CD4-positive, alpha-beta T cell (primary cell): ENCODE measurements at regions of chr2 and their contacts with region 1.

Region 1: GRCh38 chr2:217162533-217162932 is 302.7 kb upstream of the TNP1 start:
- DNase-seq: peak in 2 of 14 experiments; percentile 27 to 35
- ATAC-seq: peak; percentile 26
- H3K4me3 ChIP-seq: no peak overlapping the region
- H3K4me3 Mint-ChIP-seq: no peak overlapping the region
- H3K27ac ChIP-seq: no peak overlapping the region
- H3K27ac Mint-ChIP-seq: no peak overlapping the region
- H3K4me1 ChIP-seq: no peaks in the 10 kb centered on the region
- H3K4me1 Mint-ChIP-seq: peaks cover 19% of the 10 kb centered on the region
- H3K27me3 ChIP-seq: no peaks in the 10 kb centered on the region
- H3K27me3 Mint-ChIP-seq: peaks cover 4% of the 10 kb centered on the region
- CTCF ChIP-seq: no peak

Region 2: DNA sequence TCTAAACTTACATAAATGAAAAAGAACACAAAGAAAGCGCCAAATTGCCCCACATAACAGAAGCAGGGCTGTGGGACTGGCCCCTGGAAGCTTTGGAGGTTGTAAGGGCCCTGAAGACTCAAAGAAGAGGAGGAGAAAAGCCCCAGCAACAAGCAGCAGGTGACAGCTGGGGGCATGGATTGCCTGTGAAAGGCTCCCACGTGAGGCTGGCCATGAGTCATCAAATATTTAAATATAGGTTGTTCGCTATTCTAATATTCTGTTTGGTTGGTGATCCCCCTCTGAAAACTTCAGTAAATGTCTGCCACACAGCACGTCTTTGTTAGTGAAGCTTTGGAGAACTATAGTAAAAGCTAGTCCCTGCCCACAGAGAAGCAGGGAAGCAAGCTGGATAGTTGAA is 1281.6 kb before region 1 on chr2:
- CTCF ChIA-PET with region 1: no interaction called
- POLR2A ChIA-PET with region 1: no interaction called
- intact Hi-C with region 1: no loop called
- DNase-seq: no peak
- ATAC-seq: no peak
- H3K4me3 ChIP-seq: no peak overlapping the region
- H3K4me3 Mint-ChIP-seq: no peak overlapping the region
- H3K27ac ChIP-seq: no peak overlapping the region
- H3K27ac Mint-ChIP-seq: no peak overlapping the region
- H3K4me1 ChIP-seq: no peaks in the 10 kb centered on the region
- H3K4me1 Mint-ChIP-seq: no peaks in the 10 kb centered on the region
- H3K27me3 ChIP-seq: peaks cover 0 to 7% of the 10 kb centered on the region in 2 experiments
- H3K27me3 Mint-ChIP-seq: no peaks in the 10 kb centered on the region
- CTCF ChIP-seq: no peak

Region 3: GRCh38 chr2:216698895-216699294 is 463.6 kb before region 1 on chr2:
- CTCF ChIA-PET with region 1: no interaction called
- POLR2A ChIA-PET with region 1: no interaction called
- intact Hi-C with region 1: loop called in 1 of 2 experiments (anchors 5 kb)
- DNase-seq: peak in 3 of 14 experiments; percentile 13 to 49 (median 38)
- ATAC-seq: peak; percentile 64
- H3K4me3 ChIP-seq: no peak overlapping the region
- H3K4me3 Mint-ChIP-seq: no peak overlapping the region
- H3K27ac ChIP-seq: no peak overlapping the region
- H3K27ac Mint-ChIP-seq: no peak overlapping the region
- H3K4me1 ChIP-seq: peaks cover 10% of the 10 kb centered on the region
- H3K4me1 Mint-ChIP-seq: peaks cover 8% of the 10 kb centered on the region
- H3K27me3 ChIP-seq: peaks cover 28 to 39% of the 10 kb centered on the region in 2 experiments
- H3K27me3 Mint-ChIP-seq: peaks cover 16% of the 10 kb centered on the region
- CTCF ChIP-seq: peak; percentile 26

Region 4: GRCh38 chr2:216918088-216918680 is 244.3 kb before region 1 on chr2:
- CTCF ChIA-PET with region 1: no interaction called
- POLR2A ChIA-PET with region 1: no interaction called
- intact Hi-C with region 1: no loop called
- DNase-seq: no peak
- ATAC-seq: no peak
- H3K4me3 ChIP-seq: no peak overlapping the region
- H3K4me3 Mint-ChIP-seq: no peak overlapping the region
- H3K27ac ChIP-seq: no peak overlapping the region
- H3K27ac Mint-ChIP-seq: no peak overlapping the region
- H3K4me1 ChIP-seq: no peaks in the 10 kb centered on the region
- H3K4me1 Mint-ChIP-seq: no peaks in the 10 kb centered on the region
- H3K27me3 ChIP-seq: no peaks in the 10 kb centered on the region
- H3K27me3 Mint-ChIP-seq: no peaks in the 10 kb centered on the region
- CTCF ChIP-seq: no peak

Region 5: DNA sequence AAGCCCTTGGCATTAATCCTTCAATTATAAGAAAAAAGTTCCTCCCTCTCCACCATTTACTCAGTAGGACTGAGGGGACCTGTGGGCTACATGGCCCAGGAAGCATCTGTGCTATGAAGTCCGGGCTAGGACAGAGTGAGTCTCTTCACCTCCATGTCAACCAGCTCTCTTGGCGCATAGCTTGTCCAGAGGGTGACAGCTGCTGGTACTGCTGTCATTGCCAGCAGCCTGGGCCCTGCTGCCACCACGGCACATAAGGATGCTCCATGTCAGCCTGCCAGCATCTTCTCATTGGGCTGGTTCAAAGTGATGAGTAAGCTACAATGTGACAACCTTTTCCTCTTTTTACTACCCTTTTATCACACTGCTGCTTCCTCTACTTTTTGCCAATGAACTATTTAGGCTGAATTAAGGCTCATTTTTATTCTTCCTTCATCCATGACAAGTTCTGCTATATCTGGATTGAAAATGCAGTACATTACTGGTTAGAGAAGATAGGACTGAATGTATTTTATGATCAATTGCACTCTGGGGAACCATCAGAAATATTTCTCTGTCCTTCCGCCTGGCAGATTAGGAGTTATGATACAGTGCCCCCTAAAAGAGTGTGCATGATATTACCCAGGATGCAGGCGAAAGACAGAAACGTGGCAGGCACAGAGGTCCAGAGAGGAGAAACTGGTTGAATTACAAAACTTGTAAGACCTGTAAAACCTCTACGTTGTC is 43.8 kb before region 1 on chr2:
- CTCF ChIA-PET with region 1: no interaction called
- POLR2A ChIA-PET with region 1: no interaction called
- intact Hi-C with region 1: no loop called
- DNase-seq: no peak
- ATAC-seq: no peak
- H3K4me3 ChIP-seq: no peak overlapping the region
- H3K4me3 Mint-ChIP-seq: no peak overlapping the region
- H3K27ac ChIP-seq: no peak overlapping the region
- H3K27ac Mint-ChIP-seq: no peak overlapping the region
- H3K4me1 ChIP-seq: no peaks in the 10 kb centered on the region
- H3K4me1 Mint-ChIP-seq: no peaks in the 10 kb centered on the region
- H3K27me3 ChIP-seq: no peaks in the 10 kb centered on the region
- H3K27me3 Mint-ChIP-seq: peaks cover 6% of the 10 kb centered on the region
- CTCF ChIP-seq: no peak